Activated CD4-positive, alpha-beta T cell treated with anti-CD3 and anti-CD28 coated beads, Interleukin-2, amount 10 ng/mL, durations not matched to agents 24 days and 14 days (primary cell): ENCODE measurements at regions of chr10 and their contacts with region 1.

Region 1: GRCh38 chr10:99732033-99732912 is at the starts of genes COX15 and CUTC:
- DNase-seq: peak; percentile 99
- H3K4me3 Mint-ChIP-seq: peak within 1 kb of the TSS; percentile 98
- H3K27ac Mint-ChIP-seq: peak within 1 kb of the TSS; percentile 98
- H3K4me1 Mint-ChIP-seq: peaks cover 26% of the 10 kb centered on the region
- H3K27me3 Mint-ChIP-seq: no peaks in the 10 kb centered on the region
- total RNA-seq, gene COX15: 40.7 and 41.1 TPM in 2 replicates
- total RNA-seq, gene CUTC: 43.1 and 46.8 TPM in 2 replicates

Region 2: DNA sequence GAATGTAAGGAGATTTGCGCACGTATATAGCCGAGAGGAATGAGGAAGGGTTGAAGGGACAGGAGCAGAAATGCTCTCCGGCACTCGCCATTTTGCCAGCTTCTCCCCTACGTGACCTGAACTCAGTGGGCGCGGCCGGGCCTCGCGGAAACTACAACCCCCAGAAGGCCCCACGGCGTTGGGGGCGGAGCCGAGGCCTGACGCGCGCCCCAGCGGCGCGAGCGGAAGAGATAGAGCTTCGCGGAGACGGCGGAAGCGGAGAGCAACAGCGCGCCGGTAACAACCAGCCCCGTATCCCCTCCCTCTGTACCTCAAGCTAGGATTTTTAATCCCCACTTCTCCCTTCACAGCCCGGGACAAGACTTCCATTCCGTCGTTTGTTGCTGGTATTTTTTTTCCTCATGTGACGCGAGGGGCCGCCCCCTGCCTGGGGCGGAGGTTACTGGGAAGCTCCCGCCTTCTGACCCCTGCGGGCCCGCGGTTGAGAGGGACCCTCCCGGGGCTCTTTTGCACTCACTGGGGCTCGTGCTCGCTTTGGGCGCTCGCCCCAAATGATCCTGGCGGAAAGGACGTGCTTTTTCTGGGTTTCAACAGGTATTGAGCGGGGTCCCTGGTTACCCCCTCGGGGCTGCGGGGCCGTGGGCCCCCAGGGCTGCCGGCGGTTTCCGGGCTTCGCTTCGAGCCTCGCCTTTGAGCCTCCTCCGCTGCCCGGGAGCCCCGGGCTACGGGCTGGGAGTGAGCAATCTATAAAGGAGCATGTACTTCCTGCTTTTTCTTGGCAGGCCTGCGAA is 1597.6 kb before region 1 on chr10 and contains the start of gene R3HCC1L:
- intact Hi-C with region 1: loop called (anchors 10 kb)
- DNase-seq: peak; percentile 98
- H3K4me3 Mint-ChIP-seq: peak within 1 kb of the TSS; percentile 94
- H3K27ac Mint-ChIP-seq: peak within 1 kb of the TSS; percentile 88
- H3K4me1 Mint-ChIP-seq: peaks cover 36% of the 10 kb centered on the region
- H3K27me3 Mint-ChIP-seq: peaks cover 2% of the 10 kb centered on the region
- total RNA-seq, gene R3HCC1L: 17.6 and 19.3 TPM in 2 replicates

Region 3: GRCh38 chr10:99013885-99014284 is 718.4 kb before region 1 on chr10:
- intact Hi-C with region 1: no loop called
- DNase-seq: no peak
- H3K4me3 Mint-ChIP-seq: no peak overlapping the region
- H3K27ac Mint-ChIP-seq: no peak overlapping the region
- H3K4me1 Mint-ChIP-seq: no peaks in the 10 kb centered on the region
- H3K27me3 Mint-ChIP-seq: no peaks in the 10 kb centered on the region

Region 4: DNA sequence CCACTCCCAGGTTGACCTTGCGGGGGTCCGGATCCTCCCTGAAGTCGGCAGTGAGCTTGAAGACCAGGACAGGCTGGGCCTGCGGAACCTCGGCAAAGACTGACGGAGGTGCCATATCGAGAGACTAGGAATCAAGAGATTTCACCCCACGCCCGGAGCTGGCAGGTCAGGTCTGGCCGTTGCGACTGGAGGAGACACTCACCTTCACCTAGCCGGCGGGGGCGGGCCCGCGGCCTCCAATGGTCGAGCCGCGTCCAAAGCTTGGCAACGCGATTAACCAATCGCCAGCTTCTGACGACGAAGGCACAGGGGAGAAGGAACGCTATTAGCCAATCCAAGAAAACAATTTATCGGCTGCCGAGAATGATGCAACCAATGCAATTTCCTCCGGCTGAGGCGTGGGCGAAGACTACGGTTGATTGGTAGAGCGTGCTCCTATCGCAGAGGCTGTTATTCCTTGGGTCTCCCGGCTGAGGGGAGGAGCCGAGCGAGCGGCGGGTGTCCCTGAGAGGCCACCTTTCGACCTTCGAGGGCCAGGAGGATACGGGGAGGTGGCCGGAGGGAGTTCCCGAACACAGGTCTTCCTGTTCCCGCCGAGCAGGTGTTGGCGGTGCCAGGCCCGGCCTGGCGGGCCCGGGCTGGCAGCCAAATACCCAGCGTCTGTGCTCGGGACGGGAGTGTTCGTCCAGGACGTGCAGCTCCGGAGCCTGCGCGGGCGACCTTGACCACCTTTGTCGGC is 301.7 kb before region 1 on chr10 and contains the start of gene GOT1:
- intact Hi-C with region 1: loop called (anchors 1 kb)
- DNase-seq: peak; percentile 98
- H3K4me3 Mint-ChIP-seq: peak within 1 kb of the TSS; percentile 99
- H3K27ac Mint-ChIP-seq: peak within 1 kb of the TSS; percentile 98
- H3K4me1 Mint-ChIP-seq: peaks cover 30% of the 10 kb centered on the region
- H3K27me3 Mint-ChIP-seq: no peaks in the 10 kb centered on the region
- total RNA-seq, gene GOT1: 37.2 and 38.0 TPM in 2 replicates

Region 5: GRCh38 chr10:99620713-99621453 is 111.4 kb before region 1 on chr10:
- intact Hi-C with region 1: loop called (anchors 1 kb)
- DNase-seq: peak; percentile 97
- H3K4me3 Mint-ChIP-seq: peak overlapping the region; percentile 92
- H3K27ac Mint-ChIP-seq: peak overlapping the region; percentile 96
- H3K4me1 Mint-ChIP-seq: peaks cover 35% of the 10 kb centered on the region
- H3K27me3 Mint-ChIP-seq: no peaks in the 10 kb centered on the region

Region 6: DNA sequence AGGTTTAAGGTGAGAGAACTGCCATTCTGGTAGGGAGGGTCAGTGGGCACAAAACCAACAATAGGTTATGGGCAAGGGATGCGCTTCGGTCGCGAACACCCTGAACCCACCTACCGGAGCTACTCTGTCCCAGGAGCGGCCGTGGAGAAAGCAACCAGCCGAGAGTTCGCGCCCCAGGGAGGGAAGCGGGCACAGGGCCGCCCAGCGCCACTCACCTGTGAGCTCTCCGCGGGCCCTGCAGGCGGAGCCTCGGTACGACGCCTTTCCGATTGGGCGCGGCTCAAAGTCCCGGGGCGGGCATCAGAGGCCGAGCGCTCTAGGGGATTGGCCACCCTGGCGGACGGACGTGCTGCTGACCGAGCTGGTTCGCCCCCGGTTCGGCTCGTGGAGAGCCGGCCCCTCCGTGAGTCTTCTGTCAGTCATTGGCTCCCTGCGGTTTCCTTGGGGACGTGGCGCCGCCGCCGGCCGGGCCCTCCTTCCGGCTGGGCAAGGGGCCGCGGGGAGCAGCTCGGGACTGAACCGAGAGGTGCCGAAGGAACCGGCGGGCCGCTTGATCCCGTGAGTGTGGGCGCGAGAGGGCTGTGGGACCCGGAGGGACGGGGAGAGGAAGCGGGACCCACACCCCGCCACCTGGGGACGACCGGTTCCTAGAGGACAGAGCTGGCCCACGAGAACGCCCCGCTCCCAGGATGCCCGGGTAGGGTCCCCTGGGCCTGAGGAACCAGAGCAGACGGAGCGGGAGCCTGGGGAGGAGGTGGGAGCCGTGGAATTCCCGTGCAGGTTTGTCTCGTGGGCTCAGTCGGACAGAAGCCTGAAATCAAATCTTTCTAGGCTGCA is 73.0 kb before region 1 on chr10 and contains the start of gene ENTPD7:
- intact Hi-C with region 1: loop called (anchors 2 kb)
- DNase-seq: peak; percentile 97
- H3K4me3 Mint-ChIP-seq: peak within 1 kb of the TSS; percentile 87
- H3K27ac Mint-ChIP-seq: peak within 1 kb of the TSS; percentile 85
- H3K4me1 Mint-ChIP-seq: peaks cover 18% of the 10 kb centered on the region
- H3K27me3 Mint-ChIP-seq: peaks cover 18% of the 10 kb centered on the region
- total RNA-seq, gene ENTPD7: 8.2 and 8.3 TPM in 2 replicates

Region 7: DNA sequence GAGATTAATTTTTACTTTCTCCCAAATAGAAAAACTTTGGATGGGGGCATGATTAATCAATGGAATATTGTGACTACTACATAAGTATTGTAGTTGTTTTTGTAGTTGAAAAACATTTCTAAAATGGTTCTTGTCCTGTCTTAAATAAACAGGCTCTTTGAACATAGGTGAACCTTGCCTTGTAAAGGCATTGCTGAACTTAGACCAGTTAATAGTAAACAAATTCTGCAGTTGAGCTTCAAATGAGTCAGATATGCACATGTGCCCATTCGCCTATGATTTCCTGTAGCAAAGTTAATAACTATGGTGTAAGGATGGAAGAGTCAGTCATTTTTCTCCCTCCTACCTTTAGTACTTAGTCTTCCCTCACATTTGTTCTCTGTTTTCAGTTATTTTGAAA is 22.4 kb after region 1 on chr10:
- intact Hi-C with region 1: no loop called
- DNase-seq: no peak
- H3K4me3 Mint-ChIP-seq: no peak overlapping the region
- H3K27ac Mint-ChIP-seq: no peak overlapping the region
- H3K4me1 Mint-ChIP-seq: peaks cover 3% of the 10 kb centered on the region
- H3K27me3 Mint-ChIP-seq: no peaks in the 10 kb centered on the region

Region 8: GRCh38 chr10:100009793-100010676 is 277.8 kb after region 1 on chr10 and contains the start of gene DNMBP:
- intact Hi-C with region 1: loop called (anchors 1 kb)
- DNase-seq: peak; percentile 95
- H3K4me3 Mint-ChIP-seq: peak within 1 kb of the TSS; percentile 89
- H3K27ac Mint-ChIP-seq: peak within 1 kb of the TSS; percentile 78
- H3K4me1 Mint-ChIP-seq: peaks cover 37% of the 10 kb centered on the region
- H3K27me3 Mint-ChIP-seq: peaks cover 31% of the 10 kb centered on the region
- total RNA-seq, gene DNMBP: 1.3 TPM in 2 replicates

Region 9: DNA sequence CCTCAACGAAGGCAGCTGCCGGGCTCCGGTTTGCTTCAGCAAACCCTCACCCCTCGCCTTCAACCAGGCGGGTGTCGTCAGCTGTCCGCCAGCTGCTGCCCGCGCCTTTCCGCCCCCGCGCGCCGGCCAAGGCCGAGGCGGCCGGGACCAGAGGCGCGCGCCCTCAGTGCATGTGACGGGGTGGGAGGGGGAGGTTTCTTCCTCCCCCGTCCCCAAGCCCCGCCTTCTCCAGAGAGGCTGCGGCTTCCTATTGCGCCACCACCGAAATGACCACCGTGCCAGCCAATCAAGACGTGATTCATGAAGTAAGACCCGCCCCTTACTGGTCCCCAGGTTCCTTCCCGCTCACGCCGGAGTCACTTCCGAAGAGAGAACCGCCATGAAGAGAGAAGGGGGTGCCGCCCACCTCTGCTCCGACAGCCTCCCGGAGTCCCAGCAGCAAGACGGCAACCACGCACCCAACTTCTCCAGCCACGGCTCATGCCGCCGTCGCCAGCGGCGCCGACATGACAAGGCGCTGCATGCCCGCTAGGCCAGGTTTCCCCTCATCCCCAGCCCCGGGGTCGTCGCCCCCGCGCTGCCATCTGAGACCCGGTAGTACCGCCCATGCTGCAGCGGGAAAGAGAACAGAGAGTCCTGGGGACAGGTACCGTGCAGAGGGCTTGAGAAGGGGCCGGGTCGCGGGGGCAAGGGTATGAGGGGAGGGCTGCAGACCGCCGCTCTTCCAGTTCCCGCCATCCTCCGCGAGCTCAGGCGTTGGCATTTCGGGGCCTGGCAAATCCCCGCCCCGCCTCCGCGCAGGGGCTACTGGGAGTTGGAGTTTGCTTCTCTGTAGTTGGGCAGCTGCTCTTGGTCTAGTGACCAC is 1180.6 kb after region 1 on chr10 and contains the start of gene SLF2:
- intact Hi-C with region 1: loop called (anchors 10 kb)
- DNase-seq: peak; percentile 98
- H3K4me3 Mint-ChIP-seq: peak within 1 kb of the TSS; percentile 99
- H3K27ac Mint-ChIP-seq: peak within 1 kb of the TSS; percentile 98
- H3K4me1 Mint-ChIP-seq: peaks cover 40% of the 10 kb centered on the region
- H3K27me3 Mint-ChIP-seq: no peaks in the 10 kb centered on the region
- total RNA-seq, gene SLF2: 34.9 and 35.3 TPM in 2 replicates